H1 (cell line): ENCODE measurements at regions of chr10 and their contacts with region 1.

Region 1: DNA sequence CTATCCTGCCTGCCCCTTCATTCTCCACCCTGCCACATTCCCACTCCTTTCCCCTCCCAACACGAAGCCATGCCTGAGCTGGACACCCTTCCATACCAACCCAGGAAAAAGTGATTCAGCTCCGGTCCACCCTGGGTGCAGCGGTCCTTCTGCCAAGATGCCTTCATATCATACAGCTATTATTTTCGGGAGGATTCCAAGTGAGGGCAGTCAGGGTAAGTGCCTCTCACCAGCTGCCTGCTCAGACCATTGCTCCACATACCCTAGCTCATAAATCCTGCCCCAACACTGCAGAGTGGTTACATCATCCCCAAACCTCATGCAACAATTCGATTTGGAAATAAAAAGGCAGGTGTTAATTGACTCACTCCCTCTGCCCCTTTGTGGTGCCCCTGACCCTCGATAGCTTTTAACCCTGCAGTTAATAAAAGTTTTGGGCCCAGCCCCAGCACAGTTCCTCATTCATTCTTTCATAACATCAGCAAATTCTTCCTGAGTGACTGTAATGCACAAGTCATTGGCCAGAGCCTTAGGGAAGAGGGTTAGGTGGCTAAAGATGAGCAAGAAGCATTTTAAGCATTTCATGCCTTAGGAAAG is 42.6 kb downstream of the ZNF503 start:
- DNase-seq: no peak
- H3K4me3 ChIP-seq: no peak overlapping the region
- H3K27ac ChIP-seq: no peak overlapping the region
- H3K4me1 ChIP-seq: 0 out of 7 replicates have a peak, but pooled peaks cover 0 to 2% (median 0%) of the 10 kb centered on the region in 4 experiments
- H3K27me3 ChIP-seq: peaks cover 0 to 2% (median 0%) of the 10 kb centered on the region in 4 experiments; a peak in 1 of 7 replicates
- CTCF ChIP-seq: no peak
- EP300 ChIP-seq: no peak
- POLR2A ChIP-seq: no peak
- RAD21 ChIP-seq: no peak

Region 2: DNA sequence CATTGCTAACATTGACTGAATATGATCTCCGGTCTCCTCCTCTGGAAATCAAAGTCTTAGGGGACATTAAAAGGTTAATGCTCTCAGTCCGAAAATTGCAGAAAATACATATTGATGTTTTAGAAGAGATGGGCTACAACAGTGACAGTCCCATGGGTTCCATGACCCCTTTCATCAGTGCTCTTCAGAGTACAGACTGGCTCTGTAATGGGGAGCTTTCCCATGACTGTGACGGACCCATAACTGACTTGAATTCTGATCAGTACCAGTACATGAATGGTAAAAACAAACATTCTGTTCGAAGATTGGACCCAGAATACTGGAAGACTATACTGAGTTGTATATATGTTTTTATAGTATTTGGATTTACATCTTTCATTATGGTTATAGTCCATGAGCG is 208.3 kb before region 1 on chr10:
- CTCF ChIA-PET with region 1: no interaction called
- POLR2A ChIA-PET with region 1: no interaction called
- DNase-seq: no peak
- H3K4me3 ChIP-seq: no peak overlapping the region
- H3K27ac ChIP-seq: no peak overlapping the region
- H3K4me1 ChIP-seq: no peaks in the 10 kb centered on the region
- H3K27me3 ChIP-seq: no peaks in the 10 kb centered on the region
- CTCF ChIP-seq: no peak
- EP300 ChIP-seq: no peak
- POLR2A ChIP-seq: no peak
- RAD21 ChIP-seq: no peak

Region 3: GRCh38 chr10:75342397-75342796 is 16.5 kb before region 1 on chr10:
- CTCF ChIA-PET with region 1: interaction called, 25 read pairs
- POLR2A ChIA-PET with region 1: interaction called, 4 read pairs
- DNase-seq: no peak
- H3K4me3 ChIP-seq: no peak overlapping the region
- H3K27ac ChIP-seq: no peak overlapping the region
- H3K4me1 ChIP-seq: peaks cover 0 to 3% (median 0%) of the 10 kb centered on the region in 4 experiments; a peak in 1 of 7 replicates
- H3K27me3 ChIP-seq: no peaks in the 10 kb centered on the region
- CTCF ChIP-seq: no peak
- EP300 ChIP-seq: no peak
- POLR2A ChIP-seq: no peak
- RAD21 ChIP-seq: no peak

Region 4: DNA sequence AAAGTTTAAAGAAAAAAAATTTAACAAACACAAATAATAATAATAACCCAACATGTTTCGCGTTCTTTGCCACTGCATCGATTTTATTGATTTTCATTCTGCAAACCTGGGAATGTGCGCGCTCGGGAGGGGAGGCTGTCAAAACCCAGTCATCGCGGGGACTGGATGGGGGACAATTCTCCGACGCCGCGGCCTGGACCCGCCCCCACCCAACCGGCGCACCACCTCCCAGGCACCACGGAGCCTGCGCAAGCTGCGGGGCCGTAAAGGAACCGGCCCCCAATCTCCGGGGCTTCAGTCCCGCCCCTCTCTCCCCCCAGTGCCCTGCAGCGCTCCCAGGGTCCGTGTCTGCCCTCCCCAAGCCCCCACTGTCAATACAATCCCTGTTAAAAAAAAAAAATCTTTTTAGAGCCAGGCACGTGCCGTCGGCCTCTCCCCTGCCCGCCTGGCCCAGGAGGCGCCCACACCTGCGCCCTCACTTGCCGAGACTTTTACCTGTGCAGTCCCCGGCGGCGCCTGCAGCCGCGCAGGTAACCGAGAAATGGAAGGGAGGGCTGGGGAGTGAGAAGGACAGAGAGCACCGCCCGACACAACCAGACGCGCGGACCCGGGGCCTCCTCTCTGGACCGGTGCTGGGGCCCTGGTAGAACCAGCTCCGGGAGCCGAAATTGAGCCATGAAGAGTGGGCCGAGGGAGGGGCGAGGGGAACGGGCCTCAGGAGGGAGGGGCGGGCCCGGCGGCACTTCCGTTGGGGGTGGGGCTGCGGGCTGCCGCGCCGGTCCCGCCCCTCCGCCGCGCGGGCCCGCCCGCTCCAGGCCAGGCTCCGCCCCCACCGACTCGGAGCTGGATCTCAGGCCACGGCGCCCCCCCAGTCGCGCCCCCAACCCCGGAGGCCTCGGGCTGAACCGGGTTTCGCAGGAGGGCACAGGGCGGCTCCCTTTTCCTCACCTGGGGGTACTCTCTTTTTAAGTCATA is 50.3 kb after region 1 on chr10:
- CTCF ChIA-PET with region 1: no interaction called
- POLR2A ChIA-PET with region 1: no interaction called
- DNase-seq: peak in 1 of 2 experiments; percentile 86
- H3K4me3 ChIP-seq: peak overlapping the region; percentile 67 to 82 (median 72)
- H3K27ac ChIP-seq: no peak overlapping the region
- H3K4me1 ChIP-seq: peaks cover 8 to 23% (median 13%) of the 10 kb centered on the region in 4 experiments
- H3K27me3 ChIP-seq: peaks cover 77 to 99% (median 95%) of the 10 kb centered on the region in 4 experiments
- CTCF ChIP-seq: peak in 1 of 3 experiments; percentile 5; a peak in 1 of 4 replicates
- EP300 ChIP-seq: no peak
- POLR2A ChIP-seq: no peak
- RAD21 ChIP-seq: peak in 1 of 2 experiments; percentile 32; a peak in 1 of 4 replicates